Right ventricle myocardium inferior (tissue), 1 donor: ENCODE measurements at regions of chr1 and their contacts with region 1.

Region 1: DNA sequence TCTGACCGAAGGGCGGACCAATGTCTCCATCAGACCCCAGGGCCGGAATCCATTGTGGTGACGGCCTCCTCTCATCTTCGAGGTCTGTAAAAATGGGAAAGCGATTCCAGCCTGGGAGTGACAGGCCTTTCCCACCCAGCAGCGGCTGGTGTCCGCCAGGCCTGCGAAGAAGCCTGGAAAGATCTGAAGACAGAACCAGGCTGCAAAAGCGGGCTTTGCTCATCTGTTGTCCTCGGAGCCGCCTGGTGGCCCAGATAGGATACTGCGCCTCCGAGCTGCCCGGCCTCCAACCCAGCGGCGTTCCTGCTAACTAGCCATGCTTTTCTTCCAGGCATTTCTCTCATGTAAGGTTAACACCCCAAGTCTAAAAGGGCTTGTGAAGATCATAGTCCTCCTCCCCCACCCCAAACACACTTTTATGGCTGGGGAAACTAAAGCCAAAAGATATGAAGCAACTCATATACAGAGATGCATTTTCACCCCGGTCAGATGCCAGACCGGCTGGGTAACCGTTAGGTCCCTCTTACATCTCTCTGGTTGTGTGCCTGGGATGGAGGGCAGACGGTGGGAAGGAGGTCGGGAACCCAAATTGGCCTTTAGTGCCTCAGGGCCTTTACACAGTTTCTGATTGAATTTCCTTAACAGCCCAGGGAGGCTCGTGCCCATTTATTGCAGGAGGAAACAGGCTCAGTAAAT is 1.9 kb upstream of the DHRS3 start:
- DNase-seq: peak; percentile 89
- ATAC-seq: peak; percentile 59

Region 2: DNA sequence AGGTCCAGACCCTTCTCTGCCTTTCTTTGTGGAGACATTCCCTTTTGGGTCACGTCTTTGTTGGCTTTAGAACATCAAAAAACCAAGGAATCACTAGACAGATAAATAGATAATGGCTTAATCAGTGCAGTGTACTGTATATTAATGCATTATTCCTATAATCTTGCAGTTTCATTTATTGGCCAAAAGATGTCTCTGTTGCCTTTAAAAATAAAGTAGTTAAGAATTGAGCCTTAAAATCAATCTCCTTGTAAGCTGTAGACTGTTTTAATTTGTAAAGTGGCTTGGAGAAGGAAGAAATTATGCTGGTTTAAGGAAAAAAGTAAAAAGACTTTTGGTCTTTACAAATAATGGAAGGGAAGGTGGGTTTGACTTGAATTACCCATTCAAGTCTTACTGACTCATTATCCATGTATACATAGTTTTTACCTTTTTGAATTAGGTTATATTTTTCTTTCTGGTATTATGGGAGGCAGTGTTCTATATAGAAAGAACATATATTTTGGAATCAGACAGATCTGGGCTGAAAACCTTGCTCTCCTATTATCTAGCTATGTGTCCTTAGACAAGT is 305.5 kb before region 1 on chr1:
- intact Hi-C with region 1: loop called (anchors 2 kb)
- DNase-seq: no peak
- ATAC-seq: peak; percentile 57

Region 3: DNA sequence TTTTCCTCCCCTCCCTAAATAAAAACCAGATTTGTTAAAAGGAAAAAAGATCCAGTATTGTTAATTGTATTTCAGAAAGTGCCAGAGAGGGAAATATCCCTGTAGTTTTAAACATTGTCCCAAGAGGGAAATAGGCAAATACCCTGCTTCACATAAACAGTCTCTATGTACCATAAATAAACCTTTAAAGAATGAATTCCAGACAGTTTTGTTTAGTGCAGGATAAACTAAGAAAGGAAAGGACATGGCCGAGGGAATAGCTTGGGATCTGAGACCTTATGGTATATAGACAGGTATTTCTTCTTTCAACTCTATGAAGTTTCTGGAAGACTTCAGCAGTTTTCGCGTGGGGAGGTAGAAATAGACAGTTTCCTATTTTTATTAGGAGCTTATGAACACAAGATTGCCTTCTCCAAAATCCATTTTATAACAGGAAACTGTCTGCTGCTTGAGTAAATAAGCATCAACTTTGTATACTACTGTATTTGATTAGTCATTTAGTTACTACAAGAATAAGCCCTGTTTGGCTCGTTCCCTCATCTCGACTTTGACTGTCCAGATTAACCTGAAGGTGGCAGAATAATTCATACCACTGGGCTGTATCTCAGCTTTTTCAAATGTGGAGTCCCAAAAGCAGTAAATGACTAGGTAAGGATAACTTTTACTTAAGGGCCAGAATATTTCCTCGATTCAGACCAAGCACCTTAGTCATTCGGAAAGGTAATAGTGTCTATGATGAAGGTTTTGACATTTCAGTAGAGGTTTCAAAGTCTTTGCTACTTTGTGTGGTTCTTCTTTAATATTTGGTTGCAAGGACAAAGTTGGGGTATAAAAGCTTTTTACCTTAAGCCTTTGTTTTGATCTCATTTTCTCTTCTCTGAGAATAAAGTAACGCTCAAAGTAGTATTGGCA is 212.6 kb before region 1 on chr1:
- intact Hi-C with region 1: loop called (anchors 2 kb)
- DNase-seq: no peak
- ATAC-seq: peak; percentile 54

Region 4: DNA sequence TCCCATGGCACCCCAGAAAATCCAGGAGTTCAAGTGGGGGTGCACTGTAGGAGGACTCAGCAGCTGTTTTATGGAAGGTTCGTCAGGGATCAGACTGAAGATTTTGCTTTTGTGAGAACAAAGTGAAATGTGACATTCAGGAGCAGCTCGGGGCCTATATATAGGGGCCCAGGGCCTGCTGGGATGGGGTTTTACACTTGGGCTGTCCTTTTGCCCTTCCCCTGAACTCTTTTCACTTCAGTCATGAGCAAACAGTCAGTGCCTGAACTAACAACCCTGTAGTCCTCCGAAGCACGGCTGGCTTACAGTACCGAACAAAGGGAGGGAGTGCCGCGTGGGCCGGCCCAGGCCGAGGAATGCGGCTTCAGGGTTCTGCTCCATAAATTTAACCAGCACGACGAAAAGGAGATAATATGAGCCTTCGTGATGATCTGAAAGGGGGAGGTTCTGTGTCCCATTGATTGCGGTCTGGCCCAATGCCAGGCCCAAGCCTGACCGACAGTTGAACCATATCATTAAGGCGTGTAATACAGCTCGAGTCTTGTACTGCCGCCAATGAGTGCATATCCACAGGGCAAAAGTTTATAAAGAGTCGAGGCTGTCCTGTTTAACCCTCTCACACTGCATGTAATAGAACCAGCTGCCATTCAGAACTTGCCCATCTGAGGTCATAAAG is 141.9 kb before region 1 on chr1:
- intact Hi-C with region 1: loop called (anchors 2 kb)
- DNase-seq: peak; percentile 91
- ATAC-seq: peak; percentile 73

Region 5: GRCh38 chr1:12596007-12596821 is 23.7 kb before region 1 on chr1:
- intact Hi-C with region 1: loop called (anchors 2 kb)
- DNase-seq: peak; percentile 95
- ATAC-seq: peak; percentile 73

Region 6: GRCh38 chr1:12677565-12677964 is 57.6 kb after region 1 on chr1:
- intact Hi-C with region 1: no loop called
- DNase-seq: no peak
- ATAC-seq: peak; percentile 86

Region 7: DNA sequence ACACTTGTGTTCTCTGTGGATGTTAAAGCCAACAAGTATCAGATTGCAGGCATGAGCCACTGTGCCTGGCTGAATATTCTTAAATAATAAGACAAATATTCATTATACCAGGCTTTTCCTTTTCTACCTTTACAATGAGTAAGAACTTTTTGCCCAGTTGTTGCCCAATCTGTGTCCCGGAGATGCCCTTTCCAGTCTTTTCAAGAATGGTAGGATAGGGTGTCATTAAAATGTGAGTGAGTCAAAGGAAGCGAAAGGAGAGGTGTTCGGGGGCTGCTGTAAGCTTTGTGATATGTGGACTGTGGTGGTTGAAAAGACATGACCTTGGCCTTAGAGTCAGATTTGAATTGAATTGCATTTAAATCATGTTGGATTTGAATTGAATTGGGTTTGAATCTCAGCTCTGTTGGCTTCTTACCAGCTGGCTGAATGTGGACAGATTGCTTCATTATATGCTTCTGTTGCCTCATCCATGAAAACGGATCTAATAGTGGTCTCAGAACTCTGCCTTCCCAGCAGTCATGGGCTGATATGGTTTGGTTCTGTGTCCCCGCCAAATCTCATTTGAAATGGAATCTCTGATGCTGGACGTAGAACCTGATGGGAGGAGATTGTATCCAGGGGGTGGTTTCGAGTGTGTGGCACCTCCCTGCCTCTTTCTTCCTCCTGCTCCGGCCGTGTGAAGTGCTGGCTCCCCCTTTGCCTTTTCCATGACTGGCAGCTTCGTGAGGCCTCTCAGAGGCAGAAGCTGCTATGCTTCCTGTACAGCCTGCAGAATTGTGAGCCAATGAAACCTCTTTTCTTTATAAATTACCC is 73.2 kb after region 1 on chr1:
- intact Hi-C with region 1: no loop called
- DNase-seq: no peak
- ATAC-seq: no peak